Dendritic cell treated with granulocyte-macrophage colony-stimulating factor and Interleukin-4, amounts not matched to agents 40 ng/mL and 50 ng/mL, for 4 days (primary cell): ENCODE measurements at regions of chr6 and their contacts with region 1.

Region 1: GRCh38 chr6:155174576-155175211 is 89.1 kb upstream of the CLDN20 start:
- H3K4me3 Mint-ChIP-seq: no peak overlapping the region
- H3K27ac Mint-ChIP-seq: no peak overlapping the region
- H3K4me1 Mint-ChIP-seq: peaks cover 25% of the 10 kb centered on the region
- H3K27me3 Mint-ChIP-seq: peaks cover 3% of the 10 kb centered on the region

Region 2: DNA sequence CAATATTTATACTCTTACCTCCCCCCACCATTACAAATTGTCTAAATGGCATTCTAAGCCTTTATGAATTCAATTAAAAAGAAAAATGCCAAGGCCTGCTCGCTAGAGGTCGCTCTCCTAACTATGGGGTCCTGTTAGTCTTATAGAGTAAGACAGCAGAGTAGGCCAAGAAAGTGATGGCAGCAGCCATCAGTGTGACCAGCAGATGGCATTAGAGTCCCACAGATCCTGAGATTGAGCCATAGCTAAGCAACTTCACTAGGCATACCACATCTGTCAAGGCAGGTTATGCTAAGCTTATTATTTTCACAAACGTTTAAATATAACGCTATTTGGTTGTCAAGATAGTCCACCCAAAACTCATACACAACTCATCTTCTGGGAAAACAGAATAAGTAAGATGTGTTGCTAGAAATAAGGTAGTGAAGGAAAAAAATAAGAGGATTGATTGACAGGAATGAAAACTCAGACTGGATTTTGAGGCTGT is 499.0 kb before region 1 on chr6:
- intact Hi-C with region 1: loop called (anchors 1 kb)
- H3K4me3 Mint-ChIP-seq: no peak overlapping the region
- H3K27ac Mint-ChIP-seq: no peak overlapping the region
- H3K4me1 Mint-ChIP-seq: no peaks in the 10 kb centered on the region
- H3K27me3 Mint-ChIP-seq: no peaks in the 10 kb centered on the region

Region 3: DNA sequence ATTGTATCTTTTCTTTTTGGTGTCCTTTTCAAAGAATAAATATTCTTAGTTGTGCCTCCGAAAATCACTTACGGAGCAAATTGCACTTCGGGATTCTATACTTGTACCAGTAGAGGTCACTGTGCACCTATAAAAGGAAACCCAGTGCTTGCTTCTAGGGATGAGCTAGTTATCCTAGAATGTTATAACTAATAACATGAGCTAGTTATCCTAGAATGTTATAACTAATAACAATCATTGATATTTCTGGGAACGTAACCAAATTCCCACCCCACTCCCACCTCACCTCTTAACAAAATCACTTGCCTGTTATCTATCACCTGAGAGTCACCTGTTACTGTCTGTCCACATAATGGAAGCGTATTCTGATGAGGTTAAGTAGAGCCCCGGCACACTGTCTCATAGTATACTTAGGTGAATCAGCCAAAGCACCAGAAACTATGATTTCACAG is 306.5 kb before region 1 on chr6:
- intact Hi-C with region 1: loop called (anchors 2 kb)
- H3K4me3 Mint-ChIP-seq: no peak overlapping the region
- H3K27ac Mint-ChIP-seq: no peak overlapping the region
- H3K4me1 Mint-ChIP-seq: no peaks in the 10 kb centered on the region
- H3K27me3 Mint-ChIP-seq: no peaks in the 10 kb centered on the region

Region 4: DNA sequence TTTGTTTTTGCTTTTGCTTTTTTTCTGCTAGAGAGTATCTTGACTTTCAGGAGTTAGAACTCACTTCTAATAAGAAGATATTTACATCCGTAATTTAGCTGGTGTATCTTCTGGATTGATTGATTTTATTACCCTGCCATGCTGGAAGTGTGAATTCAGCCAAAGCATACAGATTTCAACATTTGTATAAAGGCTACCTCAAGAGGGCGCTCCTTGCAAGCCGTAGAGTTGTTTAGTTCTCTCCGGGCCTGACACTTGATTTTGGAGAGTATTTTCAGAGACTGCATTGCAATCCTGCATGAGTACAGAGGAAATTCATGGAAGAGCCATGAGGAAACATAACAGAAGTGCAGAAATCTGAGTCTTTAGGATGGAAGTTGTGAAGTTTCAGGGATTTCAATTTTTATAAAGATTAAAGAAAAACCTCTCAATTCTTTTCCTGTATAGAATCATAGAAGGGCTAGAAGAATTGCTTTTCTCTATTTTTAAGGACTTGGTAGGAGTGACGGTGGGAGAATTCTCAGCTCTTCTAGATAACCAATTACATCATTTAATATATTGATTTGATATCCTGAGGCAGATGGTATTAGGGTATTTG is 246.3 kb before region 1 on chr6:
- intact Hi-C with region 1: loop called (anchors 1 kb)
- H3K4me3 Mint-ChIP-seq: no peak overlapping the region
- H3K27ac Mint-ChIP-seq: no peak overlapping the region
- H3K4me1 Mint-ChIP-seq: peaks cover 8% of the 10 kb centered on the region
- H3K27me3 Mint-ChIP-seq: no peaks in the 10 kb centered on the region

Region 5: DNA sequence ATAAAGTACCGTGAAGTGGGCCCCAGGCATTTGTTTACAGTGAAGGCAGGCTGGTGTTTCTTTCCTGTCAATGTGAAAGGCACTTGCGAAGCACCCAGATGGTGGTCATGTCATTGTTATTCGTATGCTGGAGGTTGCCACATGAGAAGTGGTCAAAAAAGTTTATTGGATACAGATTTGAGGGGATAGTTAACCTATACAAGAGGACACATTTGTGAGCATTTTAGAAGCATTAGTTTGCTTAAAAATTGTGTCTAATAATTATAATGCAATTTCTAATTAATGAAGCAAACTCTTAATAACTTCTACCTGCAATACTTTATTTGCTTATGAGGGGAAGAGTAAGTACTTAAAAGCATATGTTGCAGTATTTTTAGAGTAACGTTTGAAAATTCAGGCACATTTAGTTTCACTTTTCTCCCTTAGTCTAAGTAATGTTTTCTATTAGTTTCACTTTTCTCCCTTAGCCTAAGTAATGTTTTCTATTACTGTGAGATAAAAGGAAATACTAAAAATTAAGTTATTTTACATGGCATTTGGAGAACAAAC is 31.6 kb before region 1 on chr6:
- intact Hi-C with region 1: no loop called
- H3K4me3 Mint-ChIP-seq: peak overlapping the region; percentile 9
- H3K27ac Mint-ChIP-seq: peak overlapping the region; percentile 37
- H3K4me1 Mint-ChIP-seq: peaks cover 13% of the 10 kb centered on the region
- H3K27me3 Mint-ChIP-seq: no peaks in the 10 kb centered on the region

Region 6: DNA sequence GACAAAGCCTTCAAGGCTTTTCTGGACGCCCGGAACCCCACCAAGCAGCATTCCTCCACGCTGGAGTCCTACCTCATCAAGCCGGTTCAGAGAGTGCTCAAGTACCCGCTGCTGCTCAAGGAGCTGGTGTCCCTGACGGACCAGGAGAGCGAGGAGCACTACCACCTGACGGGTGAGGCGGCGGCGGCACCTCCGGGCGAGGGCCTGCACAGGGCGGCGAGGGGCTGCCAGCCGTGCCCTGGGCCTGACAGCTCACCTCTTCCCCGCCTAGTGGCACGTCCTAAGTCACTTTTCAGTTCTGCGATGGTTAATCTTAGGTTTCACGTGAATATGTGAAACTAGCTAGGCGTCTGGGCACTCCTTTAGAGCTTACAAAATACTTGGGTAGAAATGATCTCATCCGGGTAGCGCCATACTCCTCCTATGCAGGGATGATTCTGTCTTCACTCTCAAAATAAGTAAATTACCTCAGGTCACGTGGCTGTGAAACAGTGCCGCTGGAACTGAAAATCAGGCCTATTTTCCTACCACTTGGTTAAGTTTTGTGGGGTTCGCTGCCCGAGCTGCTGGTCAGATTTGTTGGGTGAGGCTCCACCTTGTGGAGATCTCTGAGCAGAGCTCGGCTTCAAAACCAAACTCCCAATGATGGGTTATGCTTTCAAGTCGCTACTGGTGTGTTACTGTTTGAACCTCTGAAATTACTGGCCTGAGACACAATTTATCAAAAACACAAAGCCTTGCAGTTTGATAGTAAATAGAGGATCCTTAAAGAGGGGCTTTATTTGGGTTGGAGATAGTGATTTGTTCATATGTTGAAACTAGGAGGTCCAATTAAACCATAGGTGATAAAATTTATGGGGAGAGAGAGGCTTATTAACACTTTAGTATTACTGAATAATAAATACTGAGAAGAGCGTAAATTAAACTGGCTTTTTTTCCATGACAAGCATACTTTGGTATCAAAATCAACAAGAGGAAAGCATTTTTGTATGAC is 73.6 kb after region 1 on chr6:
- intact Hi-C with region 1: loop called (anchors 1 kb)
- H3K4me3 Mint-ChIP-seq: no peak overlapping the region
- H3K27ac Mint-ChIP-seq: no peak overlapping the region
- H3K4me1 Mint-ChIP-seq: no peaks in the 10 kb centered on the region
- H3K27me3 Mint-ChIP-seq: no peaks in the 10 kb centered on the region